AG04450 (cell line): ENCODE measurements at regions of chr11 and their contacts with region 1.

Region 1: DNA sequence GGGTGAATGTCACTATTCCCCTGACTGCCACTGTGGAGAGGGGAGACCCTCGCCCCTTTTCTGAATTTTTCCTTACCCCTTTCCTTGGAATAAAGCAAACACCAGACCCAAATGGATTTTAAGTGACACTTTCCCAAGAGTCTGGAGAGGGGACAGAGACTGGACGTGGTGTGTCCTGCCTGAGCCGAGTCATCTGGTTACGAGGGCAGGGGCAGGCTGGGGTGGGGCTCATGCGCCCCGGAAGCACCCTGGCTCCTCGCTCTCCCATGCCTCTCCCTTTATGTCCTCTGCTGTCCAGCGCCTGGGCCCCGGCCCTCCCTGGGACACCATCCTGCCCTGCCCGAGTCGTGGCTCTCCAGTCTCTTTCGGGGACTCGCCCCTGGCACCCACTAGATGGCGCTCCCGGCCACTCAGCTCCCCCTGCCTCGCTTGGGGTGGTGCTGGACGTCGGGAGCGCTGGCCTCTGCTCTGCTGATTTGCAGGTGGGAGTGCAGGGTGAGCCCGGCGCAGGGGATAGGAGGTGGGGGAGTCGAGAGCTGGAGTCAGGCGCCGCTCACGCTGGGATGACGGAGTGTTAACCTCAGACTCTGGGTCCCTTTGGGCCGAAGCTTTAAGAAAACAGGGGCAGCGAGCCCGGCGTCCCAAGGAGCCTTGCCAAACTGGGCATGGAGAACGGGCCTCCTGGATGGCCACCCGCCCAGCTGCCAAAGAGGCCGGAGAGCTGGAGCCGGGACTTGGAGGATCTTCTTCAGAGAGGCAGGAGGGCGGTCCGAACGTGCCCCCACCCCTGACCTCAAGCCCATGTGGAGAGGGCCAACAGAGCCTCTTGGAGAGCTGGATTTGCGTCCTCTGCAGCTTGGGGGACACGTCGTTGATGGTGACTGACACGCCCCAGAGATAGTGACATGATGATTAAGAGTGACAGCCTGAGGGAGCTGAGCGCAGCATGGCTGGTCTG is 89.9 kb downstream of the RPS6KA4 start:
- DNase-seq: no peak
- H3K4me3 ChIP-seq: 0 out of 2 replicates have a peak overlapping the region, but pooled peaks have one; percentile 17
- H3K27ac ChIP-seq: no peak overlapping the region
- H3K27me3 ChIP-seq: peaks cover 36% of the 10 kb centered on the region
- CTCF ChIP-seq: peak; percentile 83

Region 2: GRCh38 chr11:64240394-64241174 is 208.3 kb before region 1 on chr11 and contains the start of gene FKBP2:
- CTCF ChIA-PET with region 1: no interaction called
- POLR2A ChIA-PET with region 1: no interaction called
- DNase-seq: peak; percentile 90
- H3K4me3 ChIP-seq: peak within 1 kb of the TSS; percentile 84
- H3K27ac ChIP-seq: peak within 1 kb of the TSS; percentile 94
- H3K27me3 ChIP-seq: no peaks in the 10 kb centered on the region
- CTCF ChIP-seq: no peak
- polyA plus RNA-seq, gene FKBP2: 29.9 and 39.0 TPM in 2 replicates

Region 3: GRCh38 chr11:64458997-64459396 is 10.1 kb after region 1 on chr11:
- CTCF ChIA-PET with region 1: interaction called, 16 read pairs
- POLR2A ChIA-PET with region 1: no interaction called
- DNase-seq: no peak
- H3K4me3 ChIP-seq: no peak overlapping the region
- H3K27ac ChIP-seq: no peak overlapping the region
- H3K27me3 ChIP-seq: peaks cover 5% of the 10 kb centered on the region
- CTCF ChIP-seq: no peak

Region 4: DNA sequence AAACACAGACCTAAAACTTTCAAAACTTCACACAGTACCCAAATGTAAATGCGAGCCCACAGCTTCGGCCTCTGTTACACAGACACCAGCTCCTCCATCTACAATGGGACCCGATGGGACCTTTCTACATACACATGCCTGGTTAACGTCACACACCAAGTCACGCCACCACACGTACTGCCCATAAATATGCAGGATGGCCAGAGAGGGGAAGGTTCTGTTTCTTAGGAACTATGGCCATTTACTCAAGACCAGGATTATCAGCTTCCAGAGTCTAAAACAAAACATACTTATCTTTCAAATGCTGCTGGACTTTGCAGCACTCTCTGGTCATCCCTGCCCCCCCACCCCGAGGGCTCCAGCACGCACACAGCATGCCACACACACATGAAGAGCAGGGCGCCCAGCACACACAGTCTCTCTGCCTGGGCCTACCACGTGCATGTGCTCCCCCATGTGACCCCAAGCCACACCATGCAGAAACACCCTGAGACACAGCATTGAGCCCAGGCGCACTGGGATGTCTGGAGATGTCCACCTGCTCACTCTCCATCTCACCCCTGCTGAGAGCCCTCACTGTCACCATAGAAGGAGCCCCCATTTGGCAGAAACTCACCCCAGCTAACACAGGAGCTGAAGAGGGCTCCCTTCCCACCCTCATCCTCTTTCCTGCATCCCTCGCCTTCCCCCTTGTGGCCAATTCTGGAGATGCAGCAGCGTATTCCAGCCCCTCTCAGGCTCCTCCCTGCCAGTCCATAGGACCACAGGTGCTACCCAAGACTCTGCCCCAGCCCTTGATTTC is 203.9 kb after region 1 on chr11:
- CTCF ChIA-PET with region 1: interaction called, 36 read pairs
- POLR2A ChIA-PET with region 1: no interaction called
- DNase-seq: peak; percentile 26
- H3K4me3 ChIP-seq: no peak overlapping the region
- H3K27ac ChIP-seq: no peak overlapping the region
- H3K27me3 ChIP-seq: peaks cover 12% of the 10 kb centered on the region
- CTCF ChIP-seq: peak; percentile 96